Esophagus muscularis mucosa (tissue), 4 donors: ENCODE measurements at regions of chr3 and their contacts with region 1.

Region 1: GRCh38 chr3:46976326-46977190 is at the start of gene CCDC12:
- DNase-seq: peak; percentile 99
- H3K4me3 ChIP-seq: peak within 1 kb of the TSS; percentile 67 to 89 (median 72)
- H3K27ac ChIP-seq: peak within 1 kb of the TSS; percentile 87 to 94 (median 92)
- H3K4me1 ChIP-seq: peaks cover 53 to 78% (median 74%) of the 10 kb centered on the region in 4 donors
- H3K27me3 ChIP-seq: no peaks in the 10 kb centered on the region
- CTCF ChIP-seq: no peak
- EP300 ChIP-seq: no peak
- POLR2A ChIP-seq: peak; percentile 81
- total RNA-seq, gene CCDC12: 27.5 to 54.8 (median 36.7) TPM

Region 2: DNA sequence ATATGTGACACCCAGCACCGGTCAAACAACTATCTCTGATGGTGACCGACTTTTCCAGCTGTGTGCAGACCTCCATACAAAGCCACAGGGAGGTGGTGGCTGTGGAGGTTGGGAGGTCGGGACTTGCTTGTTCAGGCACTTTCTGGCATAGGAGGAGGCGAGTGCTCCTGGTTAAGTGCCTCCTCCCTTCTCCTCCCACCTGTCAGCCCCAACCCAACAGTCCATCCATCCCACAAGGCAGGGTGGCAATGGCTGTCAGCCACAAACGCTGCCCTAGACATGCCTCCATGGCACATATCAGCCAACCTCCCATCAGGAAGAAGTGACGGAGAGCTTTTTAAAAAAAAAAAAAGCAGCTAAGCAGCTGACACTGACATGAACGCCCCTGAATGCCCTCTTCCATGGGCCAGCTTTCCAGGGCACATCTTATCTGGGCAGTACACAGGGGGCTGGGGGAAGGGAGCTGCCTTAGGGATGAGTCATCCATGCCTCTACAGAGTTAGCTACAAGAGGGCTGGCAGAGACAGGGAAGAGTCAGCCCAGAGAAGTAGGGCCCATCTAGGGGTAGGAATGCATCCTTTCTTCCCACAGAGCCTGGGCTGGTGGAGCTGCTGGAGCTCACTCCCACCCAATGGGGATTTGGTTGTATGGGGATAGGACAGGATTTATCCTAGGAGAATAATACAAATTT is 41.2 kb before region 1 on chr3:
- intact Hi-C with region 1: loop called (anchors 5 kb)
- DNase-seq: no peak
- H3K4me3 ChIP-seq: no peak overlapping the region
- H3K27ac ChIP-seq: peak overlapping the region; percentile 73 to 83 (median 78)
- H3K4me1 ChIP-seq: peaks cover 95 to 98% (median 97%) of the 10 kb centered on the region in 4 donors
- H3K27me3 ChIP-seq: no peaks in the 10 kb centered on the region
- CTCF ChIP-seq: peak; percentile 64 to 76 (median 71)
- EP300 ChIP-seq: peak; percentile 19
- POLR2A ChIP-seq: no peak